Activated T-helper 2 cell treated with anti-CD3 and anti-CD28 coated beads, Interferon-gamma antibody, Interleukin-2, Interleukin-4, amounts not matched to agents 10 μg/mL and 5 μg/mL and 100 μg/mL, durations not matched to agents 14 hours and 24 hours and 36 hours (primary cell): ENCODE measurements at regions of chr7 and their contacts with region 1.

Region 1: DNA sequence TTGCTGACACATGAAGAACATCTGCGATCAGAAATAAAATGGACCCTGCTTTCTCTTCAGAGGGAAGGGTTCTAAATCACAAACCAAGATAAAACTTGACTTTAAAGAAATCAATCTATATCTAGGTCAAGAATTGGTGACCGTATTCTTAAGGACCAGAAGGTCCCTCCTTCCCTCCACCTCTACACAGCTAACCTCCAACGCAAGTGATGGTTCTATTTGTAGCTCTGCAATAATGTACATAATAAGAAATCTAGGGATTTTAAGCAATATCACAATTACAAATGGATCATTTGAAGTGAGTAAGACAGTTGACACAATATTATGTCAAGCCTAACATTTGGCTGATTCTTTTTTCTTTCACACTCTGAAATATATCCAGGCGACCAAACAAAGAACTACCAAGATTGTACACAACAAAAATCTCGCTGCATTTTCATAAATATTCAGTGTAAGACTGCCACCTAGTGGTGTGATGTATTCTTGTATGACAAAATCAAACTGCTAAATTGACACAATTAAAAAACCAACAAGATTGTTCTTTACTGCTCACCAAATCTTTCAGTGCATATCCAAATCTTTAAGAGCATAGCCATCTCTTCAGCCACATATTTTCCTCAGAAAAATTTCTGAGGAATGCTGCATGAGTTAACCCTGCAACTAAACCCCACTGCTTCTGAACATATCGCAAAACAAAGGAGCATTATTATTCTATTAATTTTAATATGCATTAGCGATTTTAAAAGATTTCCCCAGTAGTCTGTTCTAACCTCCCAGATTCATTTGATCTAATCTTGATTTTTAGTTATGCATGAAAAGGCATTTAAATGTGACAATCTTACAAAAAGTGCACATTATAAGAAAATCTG is 44.5 kb downstream of the ICA1 start:
- DNase-seq: no peak
- H3K4me3 Mint-ChIP-seq: no peak overlapping the region
- H3K27ac Mint-ChIP-seq: no peak overlapping the region
- H3K4me1 Mint-ChIP-seq: peaks cover 34% of the 10 kb centered on the region
- H3K27me3 Mint-ChIP-seq: no peaks in the 10 kb centered on the region

Region 2: DNA sequence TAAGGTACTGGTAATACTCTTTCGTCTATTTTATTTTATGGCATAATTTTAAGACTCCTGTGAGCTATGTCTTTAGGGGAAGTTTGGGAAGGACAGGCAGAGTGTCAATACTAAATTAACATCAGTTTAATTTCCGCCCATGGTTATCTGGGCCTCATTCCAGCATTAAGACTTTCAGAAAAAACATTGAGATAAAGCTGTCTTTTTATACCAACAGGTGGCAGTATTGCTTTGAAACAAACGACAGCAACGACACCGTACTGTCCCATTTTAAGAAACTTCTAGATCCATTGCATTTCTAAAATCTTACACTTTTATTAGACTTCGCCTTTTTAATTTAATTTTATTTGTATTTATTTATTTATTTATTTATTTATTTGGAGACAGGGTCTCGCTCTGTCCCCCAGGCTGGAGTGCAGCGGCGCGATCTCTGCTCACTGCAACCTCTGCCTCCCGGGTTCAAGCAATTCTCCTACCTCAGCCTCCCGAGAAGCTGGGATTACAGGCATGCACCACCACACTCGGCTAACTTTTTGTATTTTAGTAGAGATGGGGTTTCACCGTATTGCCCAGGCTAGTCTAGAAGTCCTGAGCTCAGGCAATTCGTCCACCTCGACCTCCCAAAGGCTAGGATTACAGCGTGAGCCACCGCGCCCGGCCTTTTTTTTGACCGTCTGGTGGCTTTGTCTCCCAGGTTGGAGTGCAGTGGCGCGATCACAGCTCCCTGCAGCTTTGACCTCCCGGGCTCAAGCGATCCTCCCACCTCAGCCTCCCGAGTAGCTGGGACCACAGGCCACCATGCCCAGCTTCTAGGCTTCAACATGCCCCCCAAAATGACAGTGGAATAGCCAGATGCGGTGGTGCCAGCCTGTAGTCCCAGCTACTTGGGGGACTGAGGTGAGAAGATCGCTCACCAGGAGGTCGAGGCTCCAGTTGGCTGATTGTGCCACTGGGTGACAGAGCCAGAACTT is 1113.8 kb before region 1 on chr7:
- intact Hi-C with region 1: loop called (anchors 10 kb)
- DNase-seq: no peak
- H3K4me3 Mint-ChIP-seq: no peak overlapping the region
- H3K27ac Mint-ChIP-seq: no peak overlapping the region
- H3K4me1 Mint-ChIP-seq: peaks cover 21% of the 10 kb centered on the region
- H3K27me3 Mint-ChIP-seq: peaks cover 12% of the 10 kb centered on the region

Region 3: DNA sequence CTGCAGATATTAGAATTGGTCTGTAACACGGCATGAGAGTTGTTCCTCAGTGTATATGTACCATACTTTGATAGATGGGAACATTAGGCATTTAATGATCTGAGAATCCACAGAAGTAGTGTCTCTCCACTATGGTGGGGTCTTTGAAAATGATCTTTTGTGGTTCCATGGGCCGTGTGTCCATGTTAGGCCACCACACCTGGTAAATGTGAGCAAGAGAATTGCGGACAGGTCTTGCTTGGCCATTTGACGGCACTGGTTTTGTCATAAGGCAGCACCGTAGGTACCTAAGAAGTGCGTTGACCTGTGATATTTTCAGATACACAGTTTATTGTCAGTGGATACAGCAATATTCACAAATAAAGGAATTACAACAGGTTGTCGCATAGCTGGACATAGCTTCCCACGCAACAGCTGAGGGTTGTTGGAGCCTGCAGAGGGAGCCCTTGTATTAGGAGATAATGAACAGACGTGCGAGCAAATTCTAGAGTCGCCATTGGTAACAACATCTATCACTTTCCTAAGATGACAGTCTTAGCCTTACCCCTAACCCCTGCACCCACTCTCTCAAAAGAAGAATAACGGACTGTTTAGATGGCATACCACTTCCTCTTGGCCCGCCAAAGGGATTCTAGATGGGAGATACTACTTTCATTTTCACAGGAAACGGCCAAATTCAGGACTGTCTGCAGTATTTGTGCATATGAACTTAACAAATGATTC is 793.1 kb before region 1 on chr7:
- intact Hi-C with region 1: loop called (anchors 10 kb)
- DNase-seq: peak; percentile 12
- H3K4me3 Mint-ChIP-seq: peak overlapping the region; percentile 60
- H3K27ac Mint-ChIP-seq: no peak overlapping the region
- H3K4me1 Mint-ChIP-seq: peaks cover 9% of the 10 kb centered on the region
- H3K27me3 Mint-ChIP-seq: peaks cover 16% of the 10 kb centered on the region

Region 4: GRCh38 chr7:7512861-7513597 is 704.4 kb before region 1 on chr7:
- intact Hi-C with region 1: no loop called
- DNase-seq: no peak
- H3K4me3 Mint-ChIP-seq: no peak overlapping the region
- H3K27ac Mint-ChIP-seq: no peak overlapping the region
- H3K4me1 Mint-ChIP-seq: no peaks in the 10 kb centered on the region
- H3K27me3 Mint-ChIP-seq: peaks cover 6% of the 10 kb centered on the region

Region 5: GRCh38 chr7:7595451-7595850 is 622.0 kb before region 1 on chr7:
- intact Hi-C with region 1: loop called (anchors 2 kb)
- DNase-seq: no peak
- H3K4me3 Mint-ChIP-seq: no peak overlapping the region
- H3K27ac Mint-ChIP-seq: no peak overlapping the region
- H3K4me1 Mint-ChIP-seq: peaks cover 2% of the 10 kb centered on the region
- H3K27me3 Mint-ChIP-seq: no peaks in the 10 kb centered on the region